ENCODE measurements at regions of chr6 and their contacts with region 1.

Region 1: GRCh38 chr6:2765166-2765895 is at the start of gene WRNIP1:
- DNase-seq: peak; percentile 99
- H3K4me3 ChIP-seq: peak within 1 kb of the TSS; percentile 91
- H3K27ac ChIP-seq: peak within 1 kb of the TSS; percentile 73
- H3K4me1 ChIP-seq: peaks cover 26% of the 10 kb centered on the region
- CTCF ChIP-seq: peak; percentile 70
- total RNA-seq, gene WRNIP1: 38.1 and 54.2 TPM in 2 replicates

Region 2: DNA sequence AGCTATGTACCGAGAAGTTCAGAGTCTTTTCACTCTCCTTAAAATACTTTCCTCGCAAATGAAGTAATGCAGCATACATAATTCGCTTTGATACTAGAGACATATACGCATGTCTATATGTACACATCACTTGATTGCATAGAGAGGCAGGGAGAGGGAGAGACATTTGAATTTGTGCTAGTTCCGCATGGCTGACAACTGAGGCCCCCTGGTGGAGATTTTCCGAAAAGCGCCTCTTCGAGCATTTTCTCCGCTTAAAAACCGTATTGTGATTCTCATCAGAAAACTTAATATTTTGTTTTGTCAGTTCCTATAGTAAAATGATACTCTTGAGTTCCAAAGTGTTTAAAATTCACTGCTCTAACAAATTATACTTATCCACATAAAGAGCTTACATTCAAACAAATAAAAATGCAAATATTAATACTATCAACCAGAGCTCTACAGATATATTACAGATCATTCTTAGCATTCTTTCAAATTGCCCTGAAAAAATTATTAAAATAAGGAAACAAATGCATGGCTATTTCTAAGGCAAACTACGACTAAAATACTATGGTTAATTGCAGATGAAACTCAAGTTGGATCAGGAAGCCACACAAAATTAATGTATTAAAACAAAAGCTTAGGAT is 15.2 kb before region 1 on chr6:
- CTCF ChIA-PET with region 1: interaction called, 3 read pairs
- POLR2A ChIA-PET with region 1: interaction called, 11 read pairs
- intact Hi-C with region 1: no loop called
- DNase-seq: peak; percentile 73
- H3K4me3 ChIP-seq: no peak overlapping the region
- H3K27ac ChIP-seq: no peak overlapping the region
- H3K4me1 ChIP-seq: peaks cover 3% of the 10 kb centered on the region
- CTCF ChIP-seq: peak; percentile 99

Region 3: DNA sequence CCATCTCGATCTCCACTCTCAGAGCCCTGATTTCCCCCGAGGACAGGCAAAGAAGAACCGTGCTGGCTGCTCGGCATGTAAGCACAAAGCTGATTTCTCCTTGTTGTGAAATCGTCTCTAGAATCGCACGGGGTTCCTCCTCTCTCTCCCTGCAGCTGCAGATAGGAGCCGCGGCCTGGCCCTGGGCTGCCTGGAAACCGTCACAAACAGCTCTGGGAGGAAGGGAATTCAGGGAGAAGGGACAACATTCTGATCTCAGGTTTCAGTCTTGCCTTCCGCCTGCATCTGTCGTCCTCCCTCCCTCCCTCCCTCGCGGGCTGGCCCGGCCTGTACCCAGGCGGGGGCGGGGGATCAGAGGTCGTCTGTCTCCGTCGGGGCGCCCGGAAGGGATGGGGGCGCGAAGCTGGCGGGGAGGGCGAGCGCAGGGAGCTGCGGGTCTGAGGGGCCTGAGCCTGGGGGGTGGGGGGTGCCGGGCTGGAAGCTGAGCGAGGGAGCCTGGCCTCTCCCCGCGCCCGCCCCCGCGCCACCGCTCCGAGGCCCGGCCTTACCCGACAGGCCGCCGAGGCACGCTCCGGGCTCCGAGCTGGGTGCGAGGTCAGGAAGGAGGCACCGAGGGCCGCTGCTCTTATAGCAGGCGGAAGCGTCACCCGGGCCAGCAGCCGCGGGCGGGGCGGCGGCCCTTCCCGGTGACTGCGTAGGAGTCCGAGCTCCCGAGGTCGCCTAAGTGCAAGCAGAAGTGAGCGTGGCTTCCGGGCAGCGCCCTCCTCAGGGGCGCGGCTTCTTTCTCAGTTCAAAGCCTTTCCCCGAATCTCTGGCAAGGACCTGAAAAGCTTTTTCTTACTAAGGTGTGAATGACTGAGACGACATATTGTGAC is 76.2 kb after region 1 on chr6 and contains the start of gene SERPINB1:
- CTCF ChIA-PET with region 1: no interaction called
- POLR2A ChIA-PET with region 1: interaction called, 3 read pairs
- intact Hi-C with region 1: loop called (anchors 2 kb)
- DNase-seq: no peak
- H3K4me3 ChIP-seq: no peak within 1 kb of the TSS
- H3K27ac ChIP-seq: no peak within 1 kb of the TSS
- H3K4me1 ChIP-seq: peaks cover 16% of the 10 kb centered on the region
- CTCF ChIP-seq: no peak
- total RNA-seq, gene SERPINB1: 1.2 and 1.3 TPM in 2 replicates

Region 4: GRCh38 chr6:2911171-2911570 is 145.8 kb after region 1 on chr6:
- CTCF ChIA-PET with region 1: interaction called, 4 read pairs
- POLR2A ChIA-PET with region 1: no interaction called
- intact Hi-C with region 1: loop called (anchors 5 kb)
- DNase-seq: peak; percentile 87
- H3K4me3 ChIP-seq: peak overlapping the region; percentile 43
- H3K27ac ChIP-seq: peak overlapping the region; percentile 87
- H3K4me1 ChIP-seq: peaks cover 57% of the 10 kb centered on the region
- CTCF ChIP-seq: no peak

Region 5: DNA sequence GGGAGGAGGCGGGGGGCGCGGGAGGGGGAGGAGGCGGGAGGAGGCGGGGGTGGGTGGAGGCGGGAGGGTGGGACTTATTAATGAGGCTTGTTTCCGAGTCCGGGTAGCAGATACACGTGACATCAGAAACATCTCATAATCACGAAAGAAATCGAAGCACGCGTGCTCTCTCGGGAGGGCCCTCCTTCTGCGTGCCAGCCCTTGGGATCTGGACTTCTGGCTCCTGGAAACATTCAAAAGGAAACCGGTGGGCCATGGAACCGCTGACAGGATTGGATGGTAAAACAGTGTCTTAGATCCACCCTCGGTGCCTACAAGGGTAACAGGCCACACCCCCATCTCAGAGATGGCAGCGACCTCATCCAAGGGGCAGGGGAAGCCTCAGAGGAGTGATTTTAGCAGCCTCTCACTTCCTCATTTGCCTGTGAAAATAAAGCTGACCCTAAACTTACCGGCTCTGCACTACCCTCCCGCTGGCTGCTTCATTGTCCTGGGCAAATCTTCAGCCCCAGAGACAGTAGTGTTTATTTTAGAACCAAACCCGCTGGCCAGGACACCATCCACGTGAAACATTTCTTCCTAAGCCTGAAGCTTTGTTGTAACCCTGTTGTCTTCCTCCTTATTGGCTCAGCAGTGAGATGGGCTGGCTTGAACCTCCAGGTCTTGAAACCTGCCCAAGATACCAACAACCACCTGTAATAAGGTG is 590.9 kb after region 1 on chr6:
- CTCF ChIA-PET with region 1: no interaction called
- POLR2A ChIA-PET with region 1: no interaction called
- intact Hi-C with region 1: loop called (anchors 10 kb)
- DNase-seq: peak; percentile 95
- H3K4me3 ChIP-seq: peak overlapping the region; percentile 66
- H3K27ac ChIP-seq: peak overlapping the region; percentile 84
- H3K4me1 ChIP-seq: peaks cover 57% of the 10 kb centered on the region
- CTCF ChIP-seq: no peak

Measured in OCI-LY7 (cell line).